GM18951 (cell line): ENCODE measurements at regions of chrX and their contacts with region 1.

Region 1: DNA sequence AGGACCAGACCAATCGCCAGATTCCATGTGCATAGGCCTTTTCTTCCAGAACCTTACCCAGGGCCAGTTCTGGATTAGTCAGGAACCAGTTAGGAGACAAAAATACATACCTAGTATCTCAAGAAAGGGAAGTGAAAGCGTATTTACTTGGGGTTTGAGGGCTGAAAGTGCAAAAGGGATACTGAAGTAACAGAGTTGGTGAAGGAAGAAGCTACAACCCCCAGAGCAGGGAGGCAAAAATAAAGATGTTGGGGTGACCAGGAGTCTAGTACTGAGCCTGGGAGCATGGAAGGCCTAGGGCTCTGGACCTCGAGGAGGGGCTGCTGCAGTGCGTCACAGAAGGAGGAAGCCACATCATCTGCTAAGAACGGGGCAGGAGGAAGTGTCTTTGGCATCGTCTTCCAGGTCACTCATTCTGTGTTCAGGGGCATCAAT is 38.3 kb downstream of the TKTL1 start:
- POLR2A ChIP-seq: no peak

Region 2: GRCh38 chrX:154397819-154398724 is 64.2 kb after region 1 on chrX and contains the start of gene RPL10:
- in situ Hi-C with region 1: loop called (anchors 10 kb)
- POLR2A ChIP-seq: peak; percentile 98